ENCODE measurements at regions of chr2 and their contacts with region 1.

Region 1: DNA sequence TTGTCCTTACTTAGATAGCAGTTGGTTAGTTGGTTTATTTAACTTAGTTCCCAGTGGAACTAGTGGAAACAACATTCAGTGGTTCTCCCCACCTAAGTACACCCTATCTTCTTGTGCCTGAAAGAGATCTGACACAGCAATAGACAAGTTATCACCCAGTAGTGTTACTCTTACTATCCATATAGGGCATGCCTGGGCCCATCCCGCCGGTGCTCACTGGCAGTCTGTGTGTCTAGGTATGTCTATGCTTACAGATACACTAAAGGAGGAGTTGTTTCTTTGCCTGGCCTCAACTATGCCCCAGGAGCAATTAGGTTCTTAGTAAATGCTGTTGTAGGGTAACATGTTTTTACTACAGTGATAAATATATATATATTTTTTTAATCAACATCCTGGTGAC is 12.0 kb upstream of the NRP2 start:
- DNase-seq: no peak
- H3K4me3 ChIP-seq: no peak overlapping the region
- H3K27ac ChIP-seq: no peak overlapping the region
- H3K4me1 ChIP-seq: no peaks in the 10 kb centered on the region
- H3K27me3 ChIP-seq: no peaks in the 10 kb centered on the region
- CTCF ChIP-seq: no peak
- POLR2A ChIP-seq: no peak

Region 2: GRCh38 chr2:204315236-204315662 is 1355.0 kb before region 1 on chr2:
- intact Hi-C with region 1: loop called (anchors 5 kb)
- DNase-seq: no peak
- H3K4me3 ChIP-seq: peak overlapping the region in 2 of 3 donors; percentile 13 to 30
- H3K27ac ChIP-seq: no peak overlapping the region
- H3K4me1 ChIP-seq: no peaks in the 10 kb centered on the region
- H3K27me3 ChIP-seq: no peaks in the 10 kb centered on the region
- CTCF ChIP-seq: no peak
- POLR2A ChIP-seq: no peak